PC-3 (cell line): ENCODE measurements at regions of chr19 and their contacts with region 1.

Region 1: DNA sequence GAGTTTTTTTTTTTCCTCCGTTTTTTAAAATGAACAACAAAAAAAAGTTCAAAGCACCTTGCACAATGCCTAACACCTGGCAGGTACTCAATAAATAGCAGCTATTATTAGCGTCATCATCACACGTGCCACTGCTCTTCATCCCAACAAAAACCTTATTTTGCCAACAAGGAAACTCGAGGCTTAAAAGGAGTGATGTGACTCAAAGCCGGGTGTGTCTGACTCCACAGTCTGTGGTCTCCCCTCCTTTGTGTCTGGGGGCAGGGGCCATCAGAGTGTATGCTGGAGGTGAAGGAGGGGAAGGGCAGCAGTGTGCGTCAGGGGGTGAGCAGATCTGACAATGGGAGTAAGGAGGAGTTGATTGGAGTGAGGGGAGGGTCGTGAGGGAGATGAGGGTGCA is 34.1 kb upstream of the POU2F2 start:
- DNase-seq: peak; percentile 36
- ATAC-seq: peak; percentile 46
- H3K4me3 ChIP-seq: no peak overlapping the region
- H3K27ac ChIP-seq: no peak overlapping the region
- H3K4me1 ChIP-seq: peaks cover 11% of the 10 kb centered on the region
- H3K27me3 ChIP-seq: no peaks in the 10 kb centered on the region
- CTCF ChIP-seq: no peak

Region 2: DNA sequence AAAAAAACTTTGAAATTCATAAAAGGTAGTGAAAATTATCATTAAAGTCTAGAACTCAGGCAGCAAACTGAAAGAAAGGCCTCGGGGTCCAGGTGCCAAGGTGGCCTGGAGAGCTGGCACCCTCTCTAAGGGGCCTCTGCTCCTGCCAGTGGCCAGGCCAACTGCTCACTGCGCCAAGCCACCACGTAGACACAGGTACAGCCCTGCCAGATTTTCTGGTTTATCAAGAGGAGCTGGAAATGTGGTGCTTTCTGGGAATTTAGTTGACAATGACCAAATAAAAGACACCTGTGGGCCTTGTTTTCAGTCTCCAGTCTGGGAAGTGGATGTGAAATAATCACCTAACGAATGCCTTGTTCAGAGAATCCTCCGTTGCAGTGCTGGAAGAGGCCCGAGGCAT is 67.5 kb before region 1 on chr19:
- CTCF ChIA-PET with region 1: interaction called, 10 read pairs
- POLR2A ChIA-PET with region 1: no interaction called
- intact Hi-C with region 1: no loop called
- DNase-seq: no peak
- ATAC-seq: no peak
- H3K4me3 ChIP-seq: no peak overlapping the region
- H3K27ac ChIP-seq: no peak overlapping the region
- H3K4me1 ChIP-seq: no peaks in the 10 kb centered on the region
- H3K27me3 ChIP-seq: no peaks in the 10 kb centered on the region
- CTCF ChIP-seq: no peak

Region 3: GRCh38 chr19:42219812-42220750 is 53.8 kb after region 1 on chr19 and contains the start of gene ZNF526:
- CTCF ChIA-PET with region 1: no interaction called
- POLR2A ChIA-PET with region 1: no interaction called
- intact Hi-C with region 1: no loop called
- DNase-seq: peak; percentile 96
- ATAC-seq: peak; percentile 75
- H3K4me3 ChIP-seq: peak within 1 kb of the TSS; percentile 74
- H3K27ac ChIP-seq: peak within 1 kb of the TSS; percentile 43
- H3K4me1 ChIP-seq: peaks cover 22% of the 10 kb centered on the region
- H3K27me3 ChIP-seq: no peaks in the 10 kb centered on the region
- CTCF ChIP-seq: no peak
- total RNA-seq, gene ZNF526: 5.1 and 6.1 TPM in 2 replicates